ENCODE measurements at regions of chr18 and their contacts with region 1.

Region 1: GRCh38 chr18:1663879-1664705 is 759.4 kb downstream of the ADCYAP1 start:
- DNase-seq: peak; percentile 78
- H3K4me3 Mint-ChIP-seq: no peak overlapping the region
- H3K27ac Mint-ChIP-seq: no peak overlapping the region
- H3K4me1 Mint-ChIP-seq: no peaks in the 10 kb centered on the region
- H3K27me3 Mint-ChIP-seq: no peaks in the 10 kb centered on the region
- CTCF ChIP-seq: peak; percentile 97

Region 2: DNA sequence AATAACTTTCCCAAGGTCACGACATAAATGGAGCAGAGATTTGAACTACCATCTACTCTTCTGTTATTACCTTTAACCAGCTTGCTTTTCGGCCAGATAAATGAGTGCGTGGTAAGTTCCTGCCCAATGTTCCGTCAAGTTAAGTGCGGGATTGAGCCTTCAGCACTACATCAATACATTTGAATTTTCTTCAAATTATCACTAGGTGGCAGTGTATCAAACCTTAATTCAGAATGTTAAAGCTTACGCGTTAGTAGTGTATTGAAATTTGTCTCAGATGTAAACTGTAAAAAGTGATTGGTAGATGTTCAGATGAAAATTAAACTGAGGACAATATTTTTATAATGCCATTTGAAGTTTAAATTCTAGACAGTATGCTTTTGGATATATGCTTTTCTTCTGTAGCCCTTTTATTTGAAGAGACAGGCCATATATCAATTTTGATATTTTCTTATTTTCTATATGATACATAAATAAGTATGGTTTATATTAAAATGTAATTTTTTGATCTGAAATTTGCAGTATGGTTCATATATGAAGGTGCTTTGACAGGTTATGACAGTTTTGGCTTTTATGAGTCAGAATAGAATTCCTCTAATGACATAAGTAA is 78.1 kb before region 1 on chr18:
- CTCF ChIA-PET with region 1: interaction called, 11 read pairs
- intact Hi-C with region 1: loop called (anchors 1 kb)
- DNase-seq: no peak
- H3K4me3 Mint-ChIP-seq: no peak overlapping the region
- H3K27ac Mint-ChIP-seq: no peak overlapping the region
- H3K4me1 Mint-ChIP-seq: no peaks in the 10 kb centered on the region
- H3K27me3 Mint-ChIP-seq: peaks cover 24% of the 10 kb centered on the region
- CTCF ChIP-seq: peak; percentile 42

Measured in Calu3 (cell line).